Naive thymus-derived CD4-positive, alpha-beta T cell (primary cell): ENCODE measurements at regions of chr2 and their contacts with region 1.

Region 1: DNA sequence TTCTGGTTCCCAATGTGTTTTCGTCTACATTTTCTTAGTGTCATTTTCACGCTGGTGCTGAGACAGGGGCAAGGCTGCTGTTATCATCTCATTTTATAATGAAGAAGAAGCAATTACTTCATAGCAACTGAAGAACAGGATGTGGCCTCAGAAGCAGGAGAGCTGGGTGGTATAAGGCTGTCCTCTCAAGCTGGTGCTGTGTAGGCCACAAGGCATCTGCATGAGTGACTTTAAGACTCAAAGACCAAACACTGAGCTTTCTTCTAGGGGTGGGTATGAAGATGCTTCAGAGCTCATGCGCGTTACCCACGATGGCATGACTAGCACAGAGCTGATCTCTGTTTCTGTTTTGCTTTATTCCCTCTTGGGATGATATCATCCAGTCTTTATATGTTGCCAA is 7.3 kb downstream of the IL36G start:
- DNase-seq: peak in 7 of 9 donors; percentile 49 to 74 (median 59)
- ATAC-seq: peak; percentile 95
- H3K4me3 ChIP-seq: no peak overlapping the region
- H3K4me3 Mint-ChIP-seq: peak overlapping the region in 8 of 10 donors; percentile 0 to 50 (median 12)
- H3K27ac ChIP-seq: peak overlapping the region; percentile 43
- H3K27ac Mint-ChIP-seq: peak overlapping the region; percentile 46 to 87 (median 73)
- H3K4me1 ChIP-seq: peaks cover 0 to 32% of the 10 kb centered on the region in 2 donors
- H3K4me1 Mint-ChIP-seq: peaks cover 17 to 36% (median 25%) of the 10 kb centered on the region in 7 donors
- H3K27me3 ChIP-seq: no peaks in the 10 kb centered on the region
- H3K27me3 Mint-ChIP-seq: peaks cover 0 to 4% (median 0%) of the 10 kb centered on the region in 5 donors

Region 2: GRCh38 chr2:112706170-112706664 is 278.9 kb before region 1 on chr2:
- CTCF ChIA-PET with region 1: no interaction called
- POLR2A ChIA-PET with region 1: no interaction called
- intact Hi-C with region 1: no loop called
- DNase-seq: peak in 4 of 9 donors; percentile 13 to 73 (median 32)
- ATAC-seq: peak; percentile 88
- H3K4me3 ChIP-seq: no peak overlapping the region
- H3K4me3 Mint-ChIP-seq: peak overlapping the region in 4 of 10 donors; percentile 22 to 76 (median 46)
- H3K27ac ChIP-seq: no peak overlapping the region
- H3K27ac Mint-ChIP-seq: peak overlapping the region in 3 of 9 donors; percentile 10 to 78 (median 60)
- H3K4me1 ChIP-seq: peaks cover 0 to 15% of the 10 kb centered on the region in 2 donors
- H3K4me1 Mint-ChIP-seq: peaks cover 7 to 57% (median 13%) of the 10 kb centered on the region in 7 donors
- H3K27me3 ChIP-seq: no peaks in the 10 kb centered on the region
- H3K27me3 Mint-ChIP-seq: peaks cover 0 to 12% (median 8%) of the 10 kb centered on the region in 5 donors

Region 3: DNA sequence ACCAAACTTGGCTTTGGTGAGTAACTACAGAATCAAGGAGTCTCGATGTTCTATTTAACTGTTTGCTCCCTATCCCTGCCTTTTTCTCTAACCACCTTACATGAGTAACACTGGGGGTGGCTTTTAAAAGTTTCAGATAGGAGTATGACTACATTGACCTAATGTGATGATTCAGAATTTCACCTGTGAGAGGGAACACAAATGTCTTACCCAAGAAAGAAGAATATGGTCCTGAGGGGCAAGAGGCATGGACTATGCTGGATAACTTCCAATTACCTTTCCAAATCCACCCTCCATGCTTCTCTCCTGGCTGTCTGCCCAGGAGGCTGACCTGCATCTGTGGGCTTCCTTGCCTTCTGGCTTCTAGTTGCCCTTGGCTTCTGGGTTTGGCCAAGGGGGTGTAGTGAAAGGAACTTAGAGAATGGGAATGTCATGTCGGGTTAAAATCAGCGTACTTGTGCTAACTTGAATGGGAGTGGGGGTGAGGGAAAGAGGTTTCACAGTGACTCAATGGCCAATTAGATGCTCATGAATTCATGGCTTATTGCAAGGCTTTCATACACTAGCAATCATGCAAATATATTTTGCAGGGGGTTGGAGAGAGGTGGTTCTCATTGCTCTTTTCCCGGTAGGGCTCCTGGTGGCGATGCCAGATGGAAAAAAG is 12.5 kb before region 1 on chr2:
- CTCF ChIA-PET with region 1: no interaction called
- POLR2A ChIA-PET with region 1: interaction called, 5 read pairs
- intact Hi-C with region 1: loop called in 1 of 2 experiments (anchors 2 kb)
- DNase-seq: no peak
- ATAC-seq: no peak
- H3K4me3 ChIP-seq: no peak overlapping the region
- H3K4me3 Mint-ChIP-seq: no peak overlapping the region
- H3K27ac ChIP-seq: no peak overlapping the region
- H3K27ac Mint-ChIP-seq: peak overlapping the region in 1 of 9 donors; percentile 52
- H3K4me1 ChIP-seq: peaks cover 0 to 8% of the 10 kb centered on the region in 2 donors
- H3K4me1 Mint-ChIP-seq: peaks cover 5 to 28% (median 21%) of the 10 kb centered on the region in 7 donors
- H3K27me3 ChIP-seq: no peaks in the 10 kb centered on the region
- H3K27me3 Mint-ChIP-seq: peaks cover 0 to 35% (median 0%) of the 10 kb centered on the region in 5 donors

Region 4: DNA sequence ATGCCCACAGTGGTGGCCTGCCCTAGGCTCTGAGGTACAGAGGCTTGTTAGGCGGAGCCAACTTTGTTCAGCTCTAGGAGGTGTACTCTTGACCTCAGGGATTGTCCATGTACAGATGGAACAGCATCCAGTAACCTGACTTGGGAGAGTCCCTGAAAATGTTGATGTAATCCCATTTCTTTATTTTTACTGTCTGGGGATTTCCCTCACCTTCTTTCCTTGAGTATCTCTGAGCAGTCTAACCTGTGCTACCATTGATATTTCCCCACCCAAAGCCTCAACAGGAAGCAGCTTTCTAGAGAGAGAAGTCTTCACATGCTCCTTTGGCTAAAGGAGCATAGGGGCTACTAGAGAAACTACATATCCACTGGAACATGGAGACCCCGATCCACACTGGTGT is 30.6 kb after region 1 on chr2:
- CTCF ChIA-PET with region 1: no interaction called
- POLR2A ChIA-PET with region 1: no interaction called
- intact Hi-C with region 1: loop called in 1 of 2 experiments (anchors 5 kb)
- DNase-seq: peak in 1 of 9 donors; percentile 7
- ATAC-seq: no peak
- H3K4me3 ChIP-seq: no peak overlapping the region
- H3K4me3 Mint-ChIP-seq: peak overlapping the region in 1 of 10 donors; percentile 21
- H3K27ac ChIP-seq: no peak overlapping the region
- H3K27ac Mint-ChIP-seq: peak overlapping the region in 1 of 9 donors; percentile 80
- H3K4me1 ChIP-seq: peaks cover 0 to 8% of the 10 kb centered on the region in 2 donors
- H3K4me1 Mint-ChIP-seq: peaks cover 0 to 34% (median 20%) of the 10 kb centered on the region in 7 donors
- H3K27me3 ChIP-seq: peaks cover 0 to 3% of the 10 kb centered on the region in 2 donors
- H3K27me3 Mint-ChIP-seq: peaks cover 0 to 53% (median 5%) of the 10 kb centered on the region in 5 donors

Region 5: GRCh38 chr2:113080134-113080533 is 95.0 kb after region 1 on chr2:
- CTCF ChIA-PET with region 1: interaction called, 7 read pairs
- POLR2A ChIA-PET with region 1: no interaction called
- intact Hi-C with region 1: loop called in 1 of 2 experiments (anchors 1 kb)
- DNase-seq: peak in 7 of 9 donors; percentile 26 to 55 (median 35)
- ATAC-seq: peak; percentile 69
- H3K4me3 ChIP-seq: no peak overlapping the region
- H3K4me3 Mint-ChIP-seq: no peak overlapping the region
- H3K27ac ChIP-seq: no peak overlapping the region
- H3K27ac Mint-ChIP-seq: no peak overlapping the region
- H3K4me1 ChIP-seq: no peaks in the 10 kb centered on the region
- H3K4me1 Mint-ChIP-seq: peaks cover 2 to 13% (median 4%) of the 10 kb centered on the region in 7 donors
- H3K27me3 ChIP-seq: no peaks in the 10 kb centered on the region
- H3K27me3 Mint-ChIP-seq: peaks cover 0 to 7% (median 0%) of the 10 kb centered on the region in 5 donors

Region 6: GRCh38 chr2:113198790-113199612 is 213.9 kb after region 1 on chr2:
- CTCF ChIA-PET with region 1: interaction called, 7 read pairs
- POLR2A ChIA-PET with region 1: no interaction called
- intact Hi-C with region 1: loop called in 1 of 2 experiments (anchors 2 kb)
- DNase-seq: peak; percentile 57 to 86 (median 70)
- ATAC-seq: peak; percentile 88
- H3K4me3 ChIP-seq: no peak overlapping the region
- H3K4me3 Mint-ChIP-seq: no peak overlapping the region
- H3K27ac ChIP-seq: peak overlapping the region; percentile 44
- H3K27ac Mint-ChIP-seq: peak overlapping the region in 5 of 9 donors; percentile 36 to 75 (median 62)
- H3K4me1 ChIP-seq: peaks cover under 1 to 7% of the 10 kb centered on the region in 2 donors
- H3K4me1 Mint-ChIP-seq: peaks cover 3 to 54% (median 9%) of the 10 kb centered on the region in 7 donors
- H3K27me3 ChIP-seq: no peaks in the 10 kb centered on the region
- H3K27me3 Mint-ChIP-seq: no peaks in the 10 kb centered on the region